ENCODE measurements at regions of chr5 and their contacts with region 1.

Region 1: GRCh38 chr5:59188419-59189225 is 605.7 kb downstream of the RAB3C start:
- DNase-seq: peak; percentile 65 to 78
- H3K4me3 ChIP-seq: peak overlapping the region; percentile 34 to 37
- H3K27ac ChIP-seq: peak overlapping the region in 1 of 2 donors; percentile 45
- H3K4me1 ChIP-seq: peaks cover 0 to 22% (median 0%) of the 10 kb centered on the region in 4 donors
- H3K27me3 ChIP-seq: no peaks in the 10 kb centered on the region
- CTCF ChIP-seq: peak; percentile 69 to 84

Region 2: DNA sequence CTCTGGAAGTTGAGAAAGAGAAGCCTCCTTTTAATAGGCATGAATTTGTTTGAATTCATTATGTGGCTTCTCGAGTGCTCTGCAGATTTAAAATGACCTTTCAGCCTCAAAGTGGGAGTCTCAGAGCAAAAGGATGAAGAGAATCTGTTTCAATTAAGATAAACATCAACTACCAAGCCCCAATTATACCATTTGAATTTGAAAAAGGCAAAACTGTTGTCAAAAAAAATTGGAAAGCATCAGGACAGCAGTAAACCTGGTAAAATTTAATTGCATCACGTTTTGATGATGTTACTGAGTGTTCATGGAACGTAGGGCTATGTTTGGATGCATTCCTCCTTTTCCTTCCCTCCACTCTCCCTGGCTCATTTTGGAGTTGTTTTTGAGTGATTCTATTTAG is 67.7 kb after region 1 on chr5:
- intact Hi-C with region 1: no loop called
- DNase-seq: no peak
- H3K4me3 ChIP-seq: no peak overlapping the region
- H3K27ac ChIP-seq: peak overlapping the region; percentile 60 to 70
- H3K4me1 ChIP-seq: peaks cover 0 to 58% (median 6%) of the 10 kb centered on the region in 4 donors
- H3K27me3 ChIP-seq: no peaks in the 10 kb centered on the region
- CTCF ChIP-seq: no peak

Region 3: DNA sequence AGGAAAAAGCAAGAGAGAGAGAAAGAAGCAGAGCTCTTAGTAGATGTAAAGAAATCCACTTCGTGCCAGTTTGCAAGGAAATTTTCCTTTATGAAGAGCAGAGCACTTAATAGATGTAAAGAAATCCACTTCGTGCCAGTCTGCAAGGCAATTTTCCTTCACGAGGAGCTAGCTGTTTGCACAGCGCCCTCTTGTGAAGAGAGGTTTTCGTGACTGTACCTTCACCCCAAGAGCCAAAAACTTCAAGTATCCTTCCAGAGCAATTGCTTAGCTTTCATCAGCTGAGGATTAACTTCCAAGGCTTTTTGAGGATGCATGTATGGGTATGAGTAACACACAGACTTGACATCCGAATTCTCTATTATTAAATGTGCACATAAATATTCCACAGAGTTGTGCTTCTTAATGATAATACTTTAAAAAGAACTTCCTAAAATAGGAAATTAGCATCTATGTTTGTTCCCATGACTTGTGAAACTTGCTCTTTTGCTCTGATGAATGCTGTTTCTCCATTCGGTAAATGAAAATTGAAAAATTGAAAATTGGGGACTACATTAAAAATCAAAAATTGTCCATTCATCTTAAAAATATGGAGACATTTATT is 179.3 kb after region 1 on chr5:
- intact Hi-C with region 1: loop called (anchors 5 kb)
- DNase-seq: peak; percentile 46 to 68
- H3K4me3 ChIP-seq: no peak overlapping the region
- H3K27ac ChIP-seq: no peak overlapping the region
- H3K4me1 ChIP-seq: peaks cover 0 to 6% (median 0%) of the 10 kb centered on the region in 4 donors
- H3K27me3 ChIP-seq: no peaks in the 10 kb centered on the region
- CTCF ChIP-seq: peak; percentile 60 to 74

Region 4: DNA sequence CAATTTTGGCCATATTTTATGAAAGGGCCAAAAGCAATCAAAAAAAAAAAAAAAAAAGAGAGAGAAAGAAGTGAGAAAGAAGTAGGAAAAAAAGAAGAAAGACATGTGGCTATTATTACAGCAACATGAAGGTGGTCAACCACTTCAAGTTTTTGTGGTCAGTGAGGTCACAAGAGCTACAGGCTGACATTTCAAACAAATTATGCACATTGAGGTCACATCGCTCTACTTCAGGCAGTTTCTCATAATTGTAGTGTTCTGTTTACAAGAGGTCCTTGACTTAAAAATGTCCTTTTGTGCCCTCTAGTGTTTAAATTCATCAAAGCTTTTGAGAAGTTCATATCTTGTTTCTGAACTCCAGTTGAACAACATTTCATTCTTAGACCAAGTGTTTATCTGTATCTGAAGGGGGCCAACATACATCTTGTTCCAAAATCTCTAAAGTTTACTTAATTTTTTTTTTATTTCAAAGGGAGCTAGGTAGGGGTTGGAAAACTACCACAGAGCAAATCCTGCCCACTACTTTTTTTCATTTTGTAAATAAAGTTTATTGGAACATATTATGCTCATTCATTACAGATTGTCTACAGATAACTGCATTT is 191.8 kb after region 1 on chr5:
- intact Hi-C with region 1: loop called (anchors 5 kb)
- DNase-seq: no peak
- H3K4me3 ChIP-seq: no peak overlapping the region
- H3K27ac ChIP-seq: peak overlapping the region in 1 of 2 donors; percentile 25
- H3K4me1 ChIP-seq: no peaks in the 10 kb centered on the region
- H3K27me3 ChIP-seq: no peaks in the 10 kb centered on the region
- CTCF ChIP-seq: peak; percentile 57 to 65